B cell (primary cell): ENCODE measurements at regions of chr9 and their contacts with region 1.

Region 1: GRCh38 chr9:34376596-34377403 is at the start of gene MYORG:
- DNase-seq: peak; percentile 97
- ATAC-seq: peak; percentile 85
- H3K4me3 ChIP-seq: peak within 1 kb of the TSS; percentile 69 to 85 (median 80)
- H3K4me3 Mint-ChIP-seq: peak within 1 kb of the TSS; percentile 98
- H3K27ac ChIP-seq: no peak within 1 kb of the TSS
- H3K27ac Mint-ChIP-seq: peak within 1 kb of the TSS; percentile 91
- H3K4me1 ChIP-seq: peaks cover 29 to 43% of the 10 kb centered on the region in 2 donors
- H3K4me1 Mint-ChIP-seq: peaks cover 39% of the 10 kb centered on the region
- H3K27me3 ChIP-seq: peaks cover 0 to 15% (median 4%) of the 10 kb centered on the region in 4 experiments
- H3K27me3 Mint-ChIP-seq: no peaks in the 10 kb centered on the region
- CTCF ChIP-seq: peak; percentile 29
- total RNA-seq, gene MYORG: 0.37 and 0.49 TPM in 2 replicates

Region 2: GRCh38 chr9:33473643-33474352 is 903.0 kb before region 1 on chr9 and contains the start of gene NOL6:
- CTCF ChIA-PET with region 1: no interaction called
- POLR2A ChIA-PET with region 1: no interaction called
- intact Hi-C with region 1: loop called (anchors 10 kb)
- DNase-seq: peak; percentile 99
- ATAC-seq: peak; percentile 99
- H3K4me3 ChIP-seq: peak within 1 kb of the TSS; percentile 80 to 99 (median 95)
- H3K4me3 Mint-ChIP-seq: peak within 1 kb of the TSS; percentile 99
- H3K27ac ChIP-seq: peak within 1 kb of the TSS; percentile 44 to 81
- H3K27ac Mint-ChIP-seq: peak within 1 kb of the TSS; percentile 92
- H3K4me1 ChIP-seq: peaks cover 17 to 22% of the 10 kb centered on the region in 2 donors
- H3K4me1 Mint-ChIP-seq: peaks cover 28% of the 10 kb centered on the region
- H3K27me3 ChIP-seq: no peaks in the 10 kb centered on the region
- H3K27me3 Mint-ChIP-seq: no peaks in the 10 kb centered on the region
- CTCF ChIP-seq: no peak
- total RNA-seq, gene NOL6: 31.8 and 31.9 TPM in 2 replicates

Region 3: GRCh38 chr9:34010979-34011378 is 365.8 kb before region 1 on chr9:
- CTCF ChIA-PET with region 1: interaction called, 3 read pairs
- POLR2A ChIA-PET with region 1: no interaction called
- intact Hi-C with region 1: loop called (anchors 2 kb)
- DNase-seq: peak; percentile 50
- ATAC-seq: no peak
- H3K4me3 ChIP-seq: no peak overlapping the region
- H3K4me3 Mint-ChIP-seq: no peak overlapping the region
- H3K27ac ChIP-seq: no peak overlapping the region
- H3K27ac Mint-ChIP-seq: no peak overlapping the region
- H3K4me1 ChIP-seq: no peaks in the 10 kb centered on the region
- H3K4me1 Mint-ChIP-seq: no peaks in the 10 kb centered on the region
- H3K27me3 ChIP-seq: no peaks in the 10 kb centered on the region
- H3K27me3 Mint-ChIP-seq: no peaks in the 10 kb centered on the region
- CTCF ChIP-seq: peak; percentile 74

Region 4: DNA sequence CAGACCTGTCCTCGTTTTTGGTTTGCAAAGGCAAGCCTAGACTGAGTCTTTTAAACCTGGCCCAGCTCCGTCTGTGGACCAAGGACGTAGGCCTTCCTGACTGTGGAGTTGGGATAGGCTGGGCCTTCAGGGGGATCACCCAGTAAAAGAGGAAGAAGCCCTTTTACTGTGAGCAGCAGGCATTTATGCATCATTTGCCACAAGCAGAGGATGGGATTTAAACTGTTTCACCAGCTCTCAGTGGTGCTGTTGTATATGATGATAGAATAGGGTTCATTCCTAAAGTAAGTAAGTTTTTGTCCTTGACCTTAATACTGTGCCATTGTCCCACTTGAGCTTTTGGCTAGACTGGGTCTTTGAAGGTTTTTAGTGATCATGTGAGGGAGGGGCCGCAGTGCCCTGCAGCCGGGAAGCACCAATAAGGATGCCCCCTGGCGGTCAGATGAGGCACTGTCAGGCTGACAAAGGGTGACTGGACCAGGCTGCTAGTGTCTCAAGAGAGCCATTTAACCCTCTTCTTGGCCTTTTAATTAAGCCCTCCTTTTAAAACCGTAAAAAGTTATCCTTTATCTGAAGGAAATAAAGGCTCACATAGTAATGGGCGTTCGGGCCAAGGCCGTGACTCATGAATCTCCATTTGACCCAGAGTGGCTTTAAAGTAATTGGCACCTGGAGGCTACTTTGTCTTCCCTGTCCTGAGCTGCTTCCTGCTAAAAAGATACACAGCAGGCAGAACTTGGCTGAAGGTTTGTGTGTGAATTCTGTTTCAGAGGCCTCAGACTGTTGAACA is 123.9 kb before region 1 on chr9:
- CTCF ChIA-PET with region 1: interaction called, 16 read pairs
- POLR2A ChIA-PET with region 1: no interaction called
- intact Hi-C with region 1: no loop called
- DNase-seq: peak; percentile 75
- ATAC-seq: peak; percentile 61
- H3K4me3 ChIP-seq: no peak overlapping the region
- H3K4me3 Mint-ChIP-seq: no peak overlapping the region
- H3K27ac ChIP-seq: no peak overlapping the region
- H3K27ac Mint-ChIP-seq: no peak overlapping the region
- H3K4me1 ChIP-seq: peaks cover 0 to 15% of the 10 kb centered on the region in 2 donors
- H3K4me1 Mint-ChIP-seq: peaks cover 13% of the 10 kb centered on the region
- H3K27me3 ChIP-seq: no peaks in the 10 kb centered on the region
- H3K27me3 Mint-ChIP-seq: no peaks in the 10 kb centered on the region
- CTCF ChIP-seq: peak; percentile 91

Region 5: DNA sequence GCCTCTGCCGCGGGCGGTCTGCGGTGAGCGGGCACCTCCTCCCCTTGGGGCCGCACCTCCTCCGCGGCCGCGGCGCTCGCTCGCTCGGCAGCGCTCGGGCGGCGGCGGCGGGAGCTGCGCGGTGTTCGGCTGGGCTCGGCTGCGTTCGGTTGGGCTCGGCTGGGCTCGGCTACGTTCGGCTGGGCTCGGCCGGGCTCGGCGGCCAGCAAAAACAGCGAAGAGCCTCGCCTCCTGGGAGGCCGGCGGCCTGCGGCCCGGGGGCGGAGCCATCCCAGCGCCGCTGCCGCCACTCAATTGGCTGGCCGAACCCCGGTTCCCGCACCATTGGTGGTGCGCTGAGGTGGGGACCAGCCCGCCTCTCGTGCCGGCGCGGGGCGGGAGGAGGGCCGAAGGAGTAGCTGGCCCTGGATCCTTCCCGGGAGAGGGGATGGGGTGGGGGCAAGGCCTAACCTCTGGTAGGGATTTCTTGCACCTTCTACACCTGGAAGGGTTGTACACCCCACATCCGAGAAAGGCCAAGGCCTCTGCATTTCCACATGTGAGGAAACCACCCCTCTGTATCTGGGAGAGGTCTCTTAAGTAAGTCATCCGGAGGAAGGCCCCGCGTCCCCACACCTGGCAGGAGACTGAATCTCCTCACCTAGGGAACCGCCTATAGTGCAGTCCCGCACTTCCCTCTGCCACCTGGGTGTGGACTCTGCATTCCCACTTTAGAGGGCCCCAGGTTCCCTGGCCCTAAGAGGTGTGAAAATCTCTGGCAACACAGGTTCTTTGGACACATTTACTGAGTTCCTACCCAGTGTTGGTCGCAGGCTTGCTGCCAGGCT is 146.4 kb after region 1 on chr9 and contains the start of gene ENHO:
- CTCF ChIA-PET with region 1: no interaction called
- POLR2A ChIA-PET with region 1: no interaction called
- intact Hi-C with region 1: loop called (anchors 1 kb)
- DNase-seq: peak; percentile 95
- ATAC-seq: peak; percentile 98
- H3K4me3 ChIP-seq: peak within 1 kb of the TSS in 4 of 5 experiments; percentile 37 to 69 (median 50)
- H3K4me3 Mint-ChIP-seq: peak within 1 kb of the TSS; percentile 89
- H3K27ac ChIP-seq: no peak within 1 kb of the TSS
- H3K27ac Mint-ChIP-seq: peak within 1 kb of the TSS; percentile 76
- H3K4me1 ChIP-seq: peaks cover 9 to 12% of the 10 kb centered on the region in 2 donors
- H3K4me1 Mint-ChIP-seq: peaks cover 13% of the 10 kb centered on the region
- H3K27me3 ChIP-seq: peaks cover 0 to 18% (median 4%) of the 10 kb centered on the region in 4 experiments
- H3K27me3 Mint-ChIP-seq: peaks cover 28% of the 10 kb centered on the region
- CTCF ChIP-seq: no peak
- total RNA-seq, gene ENHO: not detected in 2 replicates

Region 6: DNA sequence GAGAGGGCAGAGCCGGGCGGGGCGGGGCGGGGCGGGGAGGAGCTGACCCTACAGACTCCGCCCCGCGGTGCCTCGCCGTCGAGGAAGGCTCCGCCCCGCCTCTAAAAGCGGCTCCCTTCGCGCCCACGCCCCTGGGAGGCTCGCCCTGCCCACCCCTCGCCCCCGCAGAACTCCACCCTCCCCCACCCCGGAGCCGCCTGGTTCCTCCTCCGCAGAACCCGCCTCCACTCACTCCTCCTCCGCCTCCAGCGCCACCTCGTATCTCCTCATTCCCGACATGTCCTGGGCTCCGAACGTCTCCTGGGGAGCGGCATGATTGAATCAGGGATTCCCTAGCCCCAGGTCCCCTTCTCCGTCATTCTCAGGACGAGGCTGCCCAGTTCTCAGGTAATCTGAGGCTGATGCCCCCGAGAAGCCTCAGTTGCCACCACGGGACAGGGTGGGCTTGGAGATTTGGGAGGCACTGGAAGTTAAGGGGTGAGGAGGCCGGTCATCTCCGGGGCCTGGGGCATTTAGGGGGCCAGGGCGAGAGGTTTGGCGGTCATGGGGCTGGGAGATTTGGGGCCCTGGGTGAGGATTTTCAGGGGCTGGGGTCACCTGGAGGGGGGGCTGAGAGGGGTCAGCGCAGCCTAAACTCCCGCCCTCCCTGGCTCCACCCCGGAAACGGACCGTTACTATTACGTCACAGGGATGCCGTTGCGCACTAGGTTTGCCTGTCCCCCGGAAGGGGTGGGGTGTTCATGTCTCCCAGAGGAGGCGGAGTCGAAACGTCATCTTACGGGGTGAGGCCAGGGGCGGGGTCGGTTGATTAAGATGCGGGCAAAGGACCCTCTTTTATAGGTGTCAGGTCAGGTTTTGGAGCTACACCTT is 288.8 kb after region 1 on chr9:
- CTCF ChIA-PET with region 1: no interaction called
- POLR2A ChIA-PET with region 1: no interaction called
- intact Hi-C with region 1: loop called (anchors 5 kb)
- DNase-seq: peak; percentile 93
- ATAC-seq: peak; percentile 90
- H3K4me3 ChIP-seq: peak overlapping the region; percentile 65 to 87 (median 83)
- H3K4me3 Mint-ChIP-seq: peak overlapping the region; percentile 94
- H3K27ac ChIP-seq: peak overlapping the region; percentile 86 to 93
- H3K27ac Mint-ChIP-seq: peak overlapping the region; percentile 94
- H3K4me1 ChIP-seq: peaks cover 10 to 18% of the 10 kb centered on the region in 2 donors
- H3K4me1 Mint-ChIP-seq: peaks cover 20% of the 10 kb centered on the region
- H3K27me3 ChIP-seq: no peaks in the 10 kb centered on the region
- H3K27me3 Mint-ChIP-seq: no peaks in the 10 kb centered on the region
- CTCF ChIP-seq: no peak